ENCODE measurements at regions of chrX and their contacts with region 1.

Region 1: DNA sequence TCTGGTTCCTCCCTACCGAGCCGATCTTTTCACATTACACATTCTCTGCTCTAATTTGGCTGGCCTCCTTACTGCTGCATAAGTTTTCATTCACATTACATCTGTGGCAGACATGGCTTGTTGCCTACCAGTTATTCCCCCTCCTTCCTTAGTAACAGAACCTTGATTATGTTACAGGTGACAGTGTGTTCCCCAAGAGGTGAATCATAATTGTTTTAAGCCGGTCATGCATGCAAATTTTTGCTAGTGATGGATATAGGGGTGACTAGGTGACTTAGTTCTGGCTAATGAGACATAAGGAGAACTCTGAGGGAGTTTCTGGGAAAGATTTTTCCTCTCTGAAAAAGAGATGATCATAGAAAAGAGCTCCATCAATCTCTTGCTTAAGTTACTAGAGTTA is 8.4 kb upstream of the LAMP2 start:
- DNase-seq: no peak
- H3K4me3 Mint-ChIP-seq: no peak overlapping the region
- H3K27ac Mint-ChIP-seq: no peak overlapping the region
- H3K4me1 Mint-ChIP-seq: peaks cover 3% of the 10 kb centered on the region
- H3K27me3 Mint-ChIP-seq: no peaks in the 10 kb centered on the region

Region 2: DNA sequence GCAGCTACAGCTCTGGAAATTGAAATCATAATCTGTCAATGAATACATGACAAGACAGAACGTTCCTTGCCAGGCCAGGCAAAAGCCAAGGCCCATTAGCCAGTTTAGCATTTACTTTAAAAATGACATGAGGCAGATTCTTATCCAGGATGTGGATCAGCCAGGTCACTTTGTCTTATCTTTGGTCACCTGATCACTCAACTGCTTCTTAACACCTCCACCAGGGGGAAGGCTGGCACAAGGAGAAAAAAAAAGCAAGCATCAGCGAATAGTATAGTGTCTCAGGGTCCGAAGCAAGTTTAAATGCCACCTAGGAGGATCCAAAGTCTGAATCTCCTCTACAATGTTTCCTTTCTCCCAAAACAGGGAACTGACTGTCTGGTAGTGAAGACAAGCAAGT is 96.8 kb before region 1 on chrX:
- intact Hi-C with region 1: loop called (anchors 5 kb)
- DNase-seq: peak; percentile 74
- H3K4me3 Mint-ChIP-seq: no peak overlapping the region
- H3K27ac Mint-ChIP-seq: no peak overlapping the region
- H3K4me1 Mint-ChIP-seq: no peaks in the 10 kb centered on the region
- H3K27me3 Mint-ChIP-seq: peaks cover 8% of the 10 kb centered on the region

Region 3: GRCh38 chrX:120452131-120452530 is 25.3 kb before region 1 on chrX:
- intact Hi-C with region 1: no loop called
- DNase-seq: peak; percentile 59
- H3K4me3 Mint-ChIP-seq: no peak overlapping the region
- H3K27ac Mint-ChIP-seq: peak overlapping the region; percentile 19
- H3K4me1 Mint-ChIP-seq: peaks cover 14% of the 10 kb centered on the region
- H3K27me3 Mint-ChIP-seq: no peaks in the 10 kb centered on the region

Region 4: GRCh38 chrX:120514236-120514635 is 36.8 kb after region 1 on chrX:
- intact Hi-C with region 1: no loop called
- DNase-seq: no peak
- H3K4me3 Mint-ChIP-seq: no peak overlapping the region
- H3K27ac Mint-ChIP-seq: no peak overlapping the region
- H3K4me1 Mint-ChIP-seq: no peaks in the 10 kb centered on the region
- H3K27me3 Mint-ChIP-seq: no peaks in the 10 kb centered on the region

Measured in activated CD4-positive, alpha-beta T cell treated with anti-CD3 and anti-CD28 coated beads, Interleukin-2, amount 10 ng/mL, durations not matched to agents 24 days and 14 days (primary cell).